ENCODE measurements at regions of chr1 and their contacts with region 1.

Region 1: GRCh38 chr1:218499011-218499691 is 154.0 kb downstream of the TGFB2 start:
- DNase-seq: peak; percentile 37 to 99
- H3K4me3 ChIP-seq: no peak overlapping the region; the same call in 1 of the 2 replicates
- H3K27ac ChIP-seq: peak overlapping the region; percentile 93
- H3K4me1 ChIP-seq: peaks cover 45% of the 10 kb centered on the region
- H3K27me3 ChIP-seq: no peaks in the 10 kb centered on the region
- CTCF ChIP-seq: no peak

Region 2: DNA sequence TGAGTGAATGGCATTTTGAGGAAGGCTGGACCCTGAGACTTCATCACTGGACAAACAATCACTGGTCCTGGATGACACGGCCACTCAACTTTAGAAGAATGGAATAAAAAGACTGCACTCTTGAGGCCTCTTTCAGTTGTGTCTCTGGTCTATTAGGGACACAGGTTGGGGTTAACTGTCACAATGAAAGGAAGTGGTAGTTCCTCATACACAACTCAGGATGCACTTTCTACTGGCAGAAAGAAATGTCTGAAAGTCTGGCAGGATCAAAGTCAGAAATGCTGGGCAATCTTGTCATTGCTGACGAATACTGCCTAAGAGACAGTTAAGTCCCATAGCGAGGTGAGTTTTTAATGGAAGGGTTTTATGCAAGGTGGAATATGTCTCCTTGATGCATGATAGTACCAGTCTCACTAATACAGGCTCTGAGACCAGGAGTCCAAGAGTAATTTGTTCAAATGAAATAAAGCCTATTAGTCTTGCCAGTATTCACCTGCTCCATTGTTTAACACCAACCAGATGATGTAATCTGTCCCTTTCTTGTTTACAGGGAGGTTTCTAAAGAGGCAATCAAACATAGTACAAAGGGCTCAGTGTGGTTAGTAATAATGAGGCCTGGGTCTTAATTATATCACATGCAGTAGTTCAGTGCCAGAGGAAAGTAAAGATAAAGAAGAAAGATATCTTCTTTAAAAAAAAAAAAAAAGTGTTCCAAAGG is 225.2 kb before region 1 on chr1:
- CTCF ChIA-PET with region 1: no interaction called
- POLR2A ChIA-PET with region 1: no interaction called
- intact Hi-C with region 1: no loop called
- DNase-seq: no peak
- H3K4me3 ChIP-seq: no peak overlapping the region
- H3K27ac ChIP-seq: no peak overlapping the region
- H3K4me1 ChIP-seq: no peaks in the 10 kb centered on the region
- H3K27me3 ChIP-seq: no peaks in the 10 kb centered on the region
- CTCF ChIP-seq: no peak

Region 3: GRCh38 chr1:218345673-218346390 is 153.3 kb before region 1 on chr1:
- CTCF ChIA-PET with region 1: no interaction called
- POLR2A ChIA-PET with region 1: interaction called, 19 read pairs
- intact Hi-C with region 1: loop called (anchors 1 kb)
- DNase-seq: peak; percentile 51 to 64
- H3K4me3 ChIP-seq: peak overlapping the region; percentile 98
- H3K27ac ChIP-seq: peak overlapping the region; percentile 85
- H3K4me1 ChIP-seq: peaks cover 40% of the 10 kb centered on the region
- H3K27me3 ChIP-seq: no peaks in the 10 kb centered on the region
- CTCF ChIP-seq: no peak

Region 4: GRCh38 chr1:218459878-218460711 is 39.1 kb before region 1 on chr1:
- CTCF ChIA-PET with region 1: no interaction called
- POLR2A ChIA-PET with region 1: no interaction called
- intact Hi-C with region 1: loop called (anchors 1 kb)
- DNase-seq: peak; percentile 68 to 93
- H3K4me3 ChIP-seq: no peak overlapping the region
- H3K27ac ChIP-seq: peak overlapping the region; percentile 63
- H3K4me1 ChIP-seq: peaks cover 14% of the 10 kb centered on the region
- H3K27me3 ChIP-seq: no peaks in the 10 kb centered on the region
- CTCF ChIP-seq: no peak

Region 5: GRCh38 chr1:218488986-218489385 is 10.2 kb before region 1 on chr1:
- CTCF ChIA-PET with region 1: no interaction called
- POLR2A ChIA-PET with region 1: interaction called, 8 read pairs
- intact Hi-C with region 1: loop called (anchors 1 kb)
- DNase-seq: peak; percentile 69 to 98
- H3K4me3 ChIP-seq: no peak overlapping the region
- H3K27ac ChIP-seq: peak overlapping the region; percentile 92
- H3K4me1 ChIP-seq: peaks cover 75% of the 10 kb centered on the region
- H3K27me3 ChIP-seq: no peaks in the 10 kb centered on the region
- CTCF ChIP-seq: no peak

Region 6: GRCh38 chr1:218674280-218674773 is 175.2 kb after region 1 on chr1:
- CTCF ChIA-PET with region 1: interaction called, 8 read pairs
- POLR2A ChIA-PET with region 1: interaction called, 6 read pairs
- intact Hi-C with region 1: loop called (anchors 1 kb)
- DNase-seq: peak; percentile 90 to 92
- H3K4me3 ChIP-seq: no peak overlapping the region
- H3K27ac ChIP-seq: no peak overlapping the region
- H3K4me1 ChIP-seq: 0 out of 2 replicates have a peak, but pooled peaks cover 13% of the 10 kb centered on the region
- H3K27me3 ChIP-seq: no peaks in the 10 kb centered on the region
- CTCF ChIP-seq: no peak

Region 7: DNA sequence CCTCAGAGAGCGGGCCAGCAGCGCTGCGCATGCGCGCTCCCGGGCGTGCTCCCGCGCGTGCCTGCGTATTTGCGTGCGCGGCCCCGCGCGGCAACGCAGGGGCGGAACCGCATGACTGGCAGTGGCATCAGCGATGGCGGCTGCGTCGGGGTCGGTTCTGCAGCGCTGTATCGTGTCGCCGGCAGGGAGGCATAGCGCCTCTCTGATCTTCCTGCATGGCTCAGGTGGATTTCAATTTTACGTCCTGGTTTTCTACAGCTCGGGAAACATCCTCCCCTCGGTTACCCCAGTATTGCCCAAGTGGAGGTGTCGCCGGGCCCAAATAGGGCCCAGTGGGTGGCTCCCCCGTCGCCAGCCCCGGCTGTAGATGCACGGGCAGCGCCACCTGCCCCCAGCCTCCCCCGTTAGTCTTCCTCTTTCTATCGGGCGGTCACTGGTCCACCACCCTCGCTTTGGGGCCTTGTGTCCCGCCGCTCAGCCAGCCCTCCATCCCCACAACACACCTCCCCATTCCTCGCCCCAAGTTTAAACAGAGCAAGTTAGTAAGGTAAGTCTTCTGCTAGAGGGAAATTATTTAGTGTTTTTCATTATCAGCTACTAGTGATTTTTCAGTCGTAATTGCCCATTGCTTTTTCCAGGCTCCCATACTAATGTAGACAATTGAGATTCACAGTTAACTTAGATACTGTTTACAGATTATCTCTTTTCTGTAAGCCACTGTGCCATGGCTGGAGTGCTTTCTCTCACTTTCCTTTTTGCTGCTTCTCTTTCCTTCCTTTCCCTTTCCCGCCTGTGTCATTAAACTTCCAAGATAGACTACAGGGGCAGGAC is 674.8 kb after region 1 on chr1 and contains the start of gene LYPLAL1:
- CTCF ChIA-PET with region 1: no interaction called
- POLR2A ChIA-PET with region 1: no interaction called
- intact Hi-C with region 1: loop called (anchors 10 kb)
- DNase-seq: peak; percentile 70 to 92
- H3K4me3 ChIP-seq: peak within 1 kb of the TSS; percentile 74
- H3K27ac ChIP-seq: peak within 1 kb of the TSS; percentile 59
- H3K4me1 ChIP-seq: peaks cover 30% of the 10 kb centered on the region
- H3K27me3 ChIP-seq: no peaks in the 10 kb centered on the region
- CTCF ChIP-seq: no peak
- total RNA-seq, gene LYPLAL1: 39.3 and 57.0 TPM in 2 replicates